MCF 10A (cell line): ENCODE measurements at regions of chr13 and their contacts with region 1.

Region 1: GRCh38 chr13:106151056-106151699 is 384.3 kb downstream of the EFNB2 start:
- DNase-seq: peak; percentile 97
- H3K4me3 Mint-ChIP-seq: peak overlapping the region; percentile 47
- H3K27ac Mint-ChIP-seq: peak overlapping the region; percentile 96
- H3K4me1 Mint-ChIP-seq: peaks cover 59% of the 10 kb centered on the region
- H3K27me3 Mint-ChIP-seq: no peaks in the 10 kb centered on the region
- CTCF ChIP-seq: no peak

Region 2: GRCh38 chr13:106104281-106104901 is 46.8 kb before region 1 on chr13:
- CTCF ChIA-PET with region 1: no interaction called
- POLR2A ChIA-PET with region 1: interaction called, 9 read pairs
- intact Hi-C with region 1: loop called (anchors 2 kb)
- DNase-seq: peak; percentile 86
- H3K4me3 Mint-ChIP-seq: peak overlapping the region; percentile 67
- H3K27ac Mint-ChIP-seq: peak overlapping the region; percentile 96
- H3K4me1 Mint-ChIP-seq: peaks cover 50% of the 10 kb centered on the region
- H3K27me3 Mint-ChIP-seq: no peaks in the 10 kb centered on the region
- CTCF ChIP-seq: no peak

Region 3: DNA sequence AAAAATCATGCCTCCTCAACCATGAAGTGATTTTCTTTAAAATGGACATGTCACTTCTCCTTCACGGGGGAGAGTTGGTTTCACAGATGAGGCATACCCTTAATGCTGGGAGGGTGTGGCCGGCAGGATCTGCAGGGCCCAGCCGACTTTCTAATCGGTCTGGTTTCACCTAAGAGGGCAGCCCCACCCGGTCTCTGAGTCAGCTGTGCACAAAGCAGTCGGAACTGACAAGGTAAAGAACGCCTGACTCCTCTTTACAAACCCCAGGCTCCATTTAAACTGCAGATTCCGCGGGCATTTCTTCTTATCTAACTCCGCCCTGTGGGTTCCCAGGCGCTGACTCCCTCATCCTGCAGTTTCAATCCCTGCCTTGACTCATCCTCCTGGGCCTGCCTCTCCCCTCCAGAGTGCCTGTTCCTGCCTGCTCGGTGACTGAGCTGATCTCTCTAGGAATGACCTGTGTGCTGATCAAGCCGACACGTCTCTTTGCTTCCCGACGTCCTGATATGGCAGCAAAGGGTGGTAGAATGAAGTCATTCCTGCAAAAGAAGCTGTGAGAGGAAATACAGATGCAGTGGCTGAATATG is 320.9 kb after region 1 on chr13:
- CTCF ChIA-PET with region 1: no interaction called
- POLR2A ChIA-PET with region 1: interaction called, 3 read pairs
- intact Hi-C with region 1: loop called (anchors 1 kb)
- DNase-seq: peak; percentile 94
- H3K4me3 Mint-ChIP-seq: peak overlapping the region; percentile 61
- H3K27ac Mint-ChIP-seq: peak overlapping the region; percentile 58
- H3K4me1 Mint-ChIP-seq: peaks cover 10% of the 10 kb centered on the region
- H3K27me3 Mint-ChIP-seq: no peaks in the 10 kb centered on the region
- CTCF ChIP-seq: no peak

Region 4: GRCh38 chr13:106507560-106508274 is 356.5 kb after region 1 on chr13:
- CTCF ChIA-PET with region 1: no interaction called
- POLR2A ChIA-PET with region 1: interaction called, 10 read pairs
- intact Hi-C with region 1: loop called (anchors 2 kb)
- DNase-seq: peak; percentile 98
- H3K4me3 Mint-ChIP-seq: peak overlapping the region; percentile 70
- H3K27ac Mint-ChIP-seq: peak overlapping the region; percentile 89
- H3K4me1 Mint-ChIP-seq: peaks cover 9% of the 10 kb centered on the region
- H3K27me3 Mint-ChIP-seq: no peaks in the 10 kb centered on the region
- CTCF ChIP-seq: no peak